MCF 10A (cell line): ENCODE measurements at regions of chr17 and their contacts with region 1.

Region 1: GRCh38 chr17:7484067-7484918 is at the start of gene POLR2A:
- DNase-seq: peak; percentile 98
- H3K4me3 Mint-ChIP-seq: peak within 1 kb of the TSS; percentile 79
- H3K27ac Mint-ChIP-seq: peak within 1 kb of the TSS; percentile 100
- H3K4me1 Mint-ChIP-seq: peaks cover 43% of the 10 kb centered on the region
- H3K27me3 Mint-ChIP-seq: no peaks in the 10 kb centered on the region
- CTCF ChIP-seq: no peak
- total RNA-seq, gene POLR2A: 89.6 and 107 TPM in 2 replicates

Region 2: GRCh38 chr17:7403977-7404736 is 80.1 kb before region 1 on chr17 and contains the start of gene TMEM256:
- CTCF ChIA-PET with region 1: interaction called, 3 read pairs
- POLR2A ChIA-PET with region 1: interaction called, 33 read pairs
- intact Hi-C with region 1: no loop called
- DNase-seq: peak; percentile 99
- H3K4me3 Mint-ChIP-seq: peak within 1 kb of the TSS; percentile 78
- H3K27ac Mint-ChIP-seq: peak within 1 kb of the TSS; percentile 86
- H3K4me1 Mint-ChIP-seq: peaks cover 16% of the 10 kb centered on the region
- H3K27me3 Mint-ChIP-seq: no peaks in the 10 kb centered on the region
- CTCF ChIP-seq: no peak
- total RNA-seq, gene TMEM256: 35.2 and 42.9 TPM in 2 replicates

Region 3: GRCh38 chr17:7460850-7461660 is 23.2 kb before region 1 on chr17:
- CTCF ChIA-PET with region 1: interaction called, 3 read pairs
- POLR2A ChIA-PET with region 1: interaction called, 95 read pairs
- intact Hi-C with region 1: no loop called
- DNase-seq: no peak
- H3K4me3 Mint-ChIP-seq: no peak overlapping the region
- H3K27ac Mint-ChIP-seq: no peak overlapping the region
- H3K4me1 Mint-ChIP-seq: peaks cover 16% of the 10 kb centered on the region
- H3K27me3 Mint-ChIP-seq: no peaks in the 10 kb centered on the region
- CTCF ChIP-seq: no peak

Region 4: GRCh38 chr17:7515911-7516610 is 31.8 kb after region 1 on chr17:
- CTCF ChIA-PET with region 1: interaction called, 20 read pairs
- POLR2A ChIA-PET with region 1: interaction called, 14 read pairs
- intact Hi-C with region 1: no loop called
- DNase-seq: no peak
- H3K4me3 Mint-ChIP-seq: no peak overlapping the region
- H3K27ac Mint-ChIP-seq: no peak overlapping the region
- H3K4me1 Mint-ChIP-seq: no peaks in the 10 kb centered on the region
- H3K27me3 Mint-ChIP-seq: no peaks in the 10 kb centered on the region
- CTCF ChIP-seq: no peak

Region 5: DNA sequence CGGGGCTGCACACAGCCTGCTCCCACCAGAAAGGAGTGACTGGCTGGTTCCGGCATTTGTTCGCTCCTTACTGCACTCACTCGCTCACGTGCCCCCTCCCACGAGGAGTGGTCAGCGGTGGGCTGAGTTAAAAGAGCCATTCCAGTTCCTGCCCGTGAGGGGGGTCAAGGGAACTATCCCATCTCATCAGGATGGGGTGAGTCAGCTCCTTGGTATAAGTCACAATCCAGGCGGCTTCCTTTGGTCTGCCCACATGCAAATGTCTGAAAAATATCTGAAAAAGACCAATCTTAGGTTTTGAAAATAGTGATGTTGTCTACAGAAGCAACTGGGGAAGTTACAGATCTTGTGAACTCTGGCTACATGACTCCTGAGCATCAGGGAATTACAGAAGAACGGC is 54.6 kb after region 1 on chr17:
- CTCF ChIA-PET with region 1: no interaction called
- POLR2A ChIA-PET with region 1: no interaction called
- intact Hi-C with region 1: no loop called
- DNase-seq: no peak
- H3K4me3 Mint-ChIP-seq: no peak overlapping the region
- H3K27ac Mint-ChIP-seq: no peak overlapping the region
- H3K4me1 Mint-ChIP-seq: no peaks in the 10 kb centered on the region
- H3K27me3 Mint-ChIP-seq: peaks cover 13% of the 10 kb centered on the region
- CTCF ChIP-seq: no peak

Region 6: GRCh38 chr17:7583253-7584109 is 99.2 kb after region 1 on chr17 and contains the start of gene MPDU1:
- CTCF ChIA-PET with region 1: interaction called, 4 read pairs
- POLR2A ChIA-PET with region 1: interaction called, 12 read pairs
- intact Hi-C with region 1: no loop called
- DNase-seq: peak; percentile 98
- H3K4me3 Mint-ChIP-seq: peak within 1 kb of the TSS; percentile 93
- H3K27ac Mint-ChIP-seq: peak within 1 kb of the TSS; percentile 100
- H3K4me1 Mint-ChIP-seq: peaks cover 56% of the 10 kb centered on the region
- H3K27me3 Mint-ChIP-seq: no peaks in the 10 kb centered on the region
- CTCF ChIP-seq: no peak
- total RNA-seq, gene MPDU1: 52.0 and 56.5 TPM in 2 replicates